Tibial artery (tissue), 4 donors: ENCODE measurements at regions of chr19 and their contacts with region 1.

Region 1: GRCh38 chr19:13277104-13277809 is 127.0 kb downstream of the IER2 start:
- DNase-seq: peak in 1 of 2 donors; percentile 34
- H3K4me3 ChIP-seq: no peak overlapping the region
- H3K27ac ChIP-seq: no peak overlapping the region
- H3K4me1 ChIP-seq: peaks cover 0 to 11% (median 5%) of the 10 kb centered on the region in 4 donors
- H3K27me3 ChIP-seq: peaks cover 0 to 9% of the 10 kb centered on the region in 2 donors
- CTCF ChIP-seq: peak; percentile 59 to 77

Region 2: GRCh38 chr19:13430790-13431582 is 153.7 kb after region 1 on chr19:
- intact Hi-C with region 1: loop called (anchors 5 kb)
- DNase-seq: peak in 1 of 2 donors; percentile 32
- H3K4me3 ChIP-seq: no peak overlapping the region
- H3K27ac ChIP-seq: no peak overlapping the region
- H3K4me1 ChIP-seq: no peaks in the 10 kb centered on the region
- H3K27me3 ChIP-seq: no peaks in the 10 kb centered on the region
- CTCF ChIP-seq: peak; percentile 55 to 66

Region 3: DNA sequence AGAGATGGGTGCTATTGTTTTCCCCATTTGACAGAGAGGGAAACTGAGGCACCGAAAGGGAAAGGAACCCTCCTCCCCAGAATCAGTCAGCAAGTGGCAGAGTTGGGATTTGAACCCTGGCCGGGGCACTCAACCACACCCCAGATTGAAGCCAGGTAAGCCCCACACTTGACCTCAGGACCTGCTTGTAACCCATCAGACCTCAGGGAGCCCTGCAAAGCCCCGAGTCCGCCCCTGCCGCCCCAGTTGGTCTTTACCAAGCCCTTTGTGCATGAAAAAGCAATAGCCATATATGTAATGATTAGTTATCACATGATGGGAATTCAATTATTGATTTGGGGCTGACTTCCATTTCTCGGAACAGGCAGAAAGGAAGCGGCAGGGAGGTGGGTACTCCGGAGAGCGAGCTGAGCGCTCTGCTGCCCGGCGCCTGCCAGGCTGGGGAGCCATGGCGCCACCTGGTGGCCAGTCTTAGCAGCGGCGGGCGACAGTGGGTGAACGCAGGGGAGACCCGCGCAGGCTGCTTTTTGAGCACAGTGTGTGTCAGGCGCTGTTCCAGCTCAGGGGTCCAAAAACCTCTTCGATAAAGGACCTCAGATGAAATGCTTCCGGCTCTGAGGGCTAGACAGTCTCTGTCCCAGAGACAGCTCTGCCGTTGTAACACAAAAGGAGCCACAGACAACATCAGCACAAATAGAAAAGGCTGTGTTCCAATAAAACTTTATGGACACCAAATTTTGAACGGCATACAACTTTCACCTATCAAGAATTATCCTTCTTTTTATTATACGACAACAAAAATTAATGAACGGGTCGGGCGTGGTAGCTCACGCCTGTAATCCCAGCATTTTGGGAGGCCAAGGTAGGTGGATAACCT is 311.9 kb after region 1 on chr19:
- intact Hi-C with region 1: loop called (anchors 5 kb)
- DNase-seq: peak; percentile 52 to 77
- H3K4me3 ChIP-seq: no peak overlapping the region
- H3K27ac ChIP-seq: no peak overlapping the region
- H3K4me1 ChIP-seq: peaks cover 0 to 4% (median 2%) of the 10 kb centered on the region in 4 donors
- H3K27me3 ChIP-seq: peaks cover 0 to 43% of the 10 kb centered on the region in 2 donors
- CTCF ChIP-seq: peak; percentile 84 to 96

Region 4: DNA sequence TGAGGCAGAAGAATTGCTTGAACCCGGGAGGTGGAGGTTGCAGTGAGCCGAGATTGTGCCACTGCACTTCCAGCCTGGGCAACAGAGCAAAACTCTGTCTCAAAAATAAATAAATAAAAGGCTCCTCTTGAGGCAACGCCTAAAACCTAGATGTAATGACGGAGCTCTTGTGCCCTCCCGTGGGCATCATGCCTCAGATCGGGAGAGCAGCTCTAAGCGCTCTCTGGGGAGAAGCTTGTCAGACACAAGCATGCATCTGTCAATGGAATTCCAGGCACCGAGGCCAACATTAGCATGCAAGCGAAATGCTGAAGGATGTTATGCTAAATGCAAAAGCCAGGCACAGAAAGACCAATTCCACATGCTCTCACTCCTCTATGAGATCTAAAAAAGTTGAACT is 441.5 kb after region 1 on chr19:
- intact Hi-C with region 1: loop called (anchors 5 kb)
- DNase-seq: no peak
- H3K4me3 ChIP-seq: no peak overlapping the region
- H3K27ac ChIP-seq: no peak overlapping the region
- H3K4me1 ChIP-seq: peaks cover 0 to 7% (median 3%) of the 10 kb centered on the region in 4 donors
- H3K27me3 ChIP-seq: no peaks in the 10 kb centered on the region
- CTCF ChIP-seq: peak in 1 of 2 experiments; percentile 33

Region 5: DNA sequence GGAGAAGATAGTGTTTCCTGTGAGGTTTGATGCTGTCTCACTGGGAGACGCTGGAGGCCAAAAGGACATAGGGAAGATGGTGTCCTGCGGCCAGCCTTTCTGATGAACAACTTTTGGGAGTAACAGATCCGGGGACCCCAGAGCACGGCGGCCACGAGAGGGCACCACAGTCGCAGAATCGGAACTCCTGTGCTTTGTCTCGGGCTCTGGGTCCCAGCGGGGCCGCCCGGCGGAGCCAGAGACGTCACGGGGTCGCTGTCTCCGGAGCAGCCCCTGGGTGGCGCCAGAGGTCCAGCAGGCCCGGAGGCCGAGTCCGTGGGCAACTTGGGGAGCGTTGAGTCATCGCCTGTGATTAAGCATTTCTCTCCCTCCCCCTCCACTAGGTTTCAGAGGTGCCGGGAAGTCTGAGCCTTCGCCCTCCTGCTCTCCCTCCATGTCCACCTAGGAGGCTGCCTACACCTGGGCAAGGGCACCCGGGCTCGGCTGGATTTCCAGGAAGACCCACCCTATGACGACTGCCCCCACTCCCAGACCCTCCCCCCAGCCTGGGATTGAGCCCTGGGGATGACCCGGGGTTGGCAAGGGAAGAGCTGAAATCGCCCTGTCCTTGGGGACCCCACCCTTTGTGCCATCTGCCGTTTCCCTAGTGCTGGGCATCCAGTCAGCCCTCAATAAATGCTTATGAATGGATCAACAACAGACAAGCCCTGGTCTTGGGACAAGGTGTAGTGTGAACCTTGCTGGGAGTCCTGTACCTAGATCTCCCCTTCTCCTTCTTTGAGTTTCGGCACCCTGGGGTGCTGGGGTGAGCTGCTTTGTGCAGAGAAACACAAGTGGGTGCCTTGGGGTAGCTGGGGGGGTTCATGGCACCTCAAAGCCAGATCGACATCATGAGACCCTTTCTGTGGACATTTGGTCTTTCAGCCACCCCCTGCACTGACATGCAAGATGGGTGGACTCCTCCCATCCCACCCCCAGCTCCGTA is 603.1 kb after region 1 on chr19:
- intact Hi-C with region 1: loop called (anchors 10 kb)
- DNase-seq: peak; percentile 98 to 99
- H3K4me3 ChIP-seq: peak overlapping the region; percentile 28 to 42
- H3K27ac ChIP-seq: peak overlapping the region; percentile 80 to 90
- H3K4me1 ChIP-seq: peaks cover 0 to 54% (median 15%) of the 10 kb centered on the region in 4 donors
- H3K27me3 ChIP-seq: no peaks in the 10 kb centered on the region
- CTCF ChIP-seq: peak; percentile 99 to 100